ENCODE measurements at regions of chr18 and their contacts with region 1.

Region 1: DNA sequence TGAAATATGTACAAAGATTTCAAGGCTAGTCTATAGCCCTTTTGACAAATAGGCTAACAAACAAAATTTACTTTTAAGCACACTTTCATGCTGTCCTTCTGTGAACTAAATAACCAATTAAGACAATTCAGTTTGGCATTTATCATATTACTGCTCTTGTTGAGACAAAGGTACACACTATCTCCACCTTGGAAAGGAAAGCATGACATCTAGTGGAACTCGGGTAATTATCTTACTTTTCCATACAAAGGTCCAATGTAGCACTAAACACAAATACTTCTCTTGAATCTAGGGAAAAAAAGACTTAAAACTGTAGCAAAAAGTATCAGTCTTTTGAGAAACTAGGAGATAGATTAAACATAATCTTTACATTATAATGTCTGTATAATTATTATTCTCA is 125.0 kb upstream of the CD226 start:
- DNase-seq: no peak

Region 2: DNA sequence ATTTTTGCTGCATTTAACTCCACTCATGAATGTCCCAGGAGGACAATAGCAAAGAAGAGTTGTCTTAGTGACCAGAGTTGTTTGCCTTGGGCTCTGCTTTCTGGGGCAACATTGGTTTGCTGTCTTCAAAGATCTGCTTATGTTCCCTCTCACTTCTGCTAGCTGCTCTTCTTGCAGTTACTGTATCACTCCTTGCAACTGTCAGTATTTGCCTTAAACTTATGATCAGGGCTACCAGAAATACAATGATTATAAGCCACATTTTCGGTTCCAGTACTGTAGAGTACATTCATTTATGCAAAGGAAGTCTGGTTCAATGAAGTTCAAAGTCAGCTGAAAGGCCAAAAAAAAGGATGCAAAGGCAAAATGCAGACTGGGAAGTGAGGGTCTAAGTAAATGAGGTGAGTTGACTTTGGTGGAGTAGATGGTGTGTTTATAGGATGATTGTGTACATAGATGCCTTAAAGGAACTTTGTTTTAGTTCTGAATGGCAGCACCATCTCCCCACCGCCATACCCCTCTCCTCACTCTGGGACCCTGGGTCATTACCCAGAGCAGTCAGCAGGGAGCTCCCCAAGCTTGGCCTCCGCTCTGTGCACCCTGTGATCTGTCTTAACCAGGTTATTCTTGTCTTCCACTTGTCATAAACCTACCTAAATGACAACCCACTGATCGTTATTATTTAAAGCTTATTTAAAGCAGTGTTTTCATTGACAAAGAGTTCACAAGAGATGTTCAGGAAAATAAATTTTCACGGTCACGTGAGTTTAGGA is 436.0 kb before region 1 on chr18:
- intact Hi-C with region 1: loop called (anchors 10 kb)
- DNase-seq: no peak

Region 3: DNA sequence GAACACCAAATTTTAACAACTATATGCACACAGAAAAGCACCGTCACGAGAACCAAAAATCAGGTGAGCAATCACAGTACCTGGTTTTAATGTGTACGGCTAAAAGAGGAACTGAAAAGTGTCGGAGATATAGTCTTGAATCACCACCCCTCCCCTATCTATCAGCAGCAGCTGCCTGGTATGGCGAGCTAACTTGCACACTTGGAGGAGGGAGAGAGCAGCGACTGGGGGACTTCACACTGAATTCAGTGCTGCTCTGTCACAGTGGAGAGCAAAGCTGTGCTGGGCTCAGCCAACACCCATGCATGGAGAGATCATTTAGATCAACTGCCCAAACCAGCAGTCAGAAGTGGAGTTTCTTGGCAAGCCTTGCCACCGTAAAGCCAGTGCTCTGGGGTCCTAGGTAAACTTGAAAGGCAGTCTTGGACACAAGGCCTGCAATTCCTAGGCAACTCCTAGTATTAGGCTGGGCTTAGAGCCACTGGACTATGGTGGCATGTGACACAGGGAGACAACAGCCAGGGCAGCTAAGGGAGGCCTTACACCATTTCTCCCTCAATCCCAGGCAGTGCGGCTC is 35.8 kb before region 1 on chr18:
- intact Hi-C with region 1: no loop called
- DNase-seq: no peak

Measured in cardiac septum (tissue), 1 donor.